Naive thymus-derived CD4-positive, alpha-beta T cell (primary cell): ENCODE measurements at regions of chr2 and their contacts with region 1.

Region 1: DNA sequence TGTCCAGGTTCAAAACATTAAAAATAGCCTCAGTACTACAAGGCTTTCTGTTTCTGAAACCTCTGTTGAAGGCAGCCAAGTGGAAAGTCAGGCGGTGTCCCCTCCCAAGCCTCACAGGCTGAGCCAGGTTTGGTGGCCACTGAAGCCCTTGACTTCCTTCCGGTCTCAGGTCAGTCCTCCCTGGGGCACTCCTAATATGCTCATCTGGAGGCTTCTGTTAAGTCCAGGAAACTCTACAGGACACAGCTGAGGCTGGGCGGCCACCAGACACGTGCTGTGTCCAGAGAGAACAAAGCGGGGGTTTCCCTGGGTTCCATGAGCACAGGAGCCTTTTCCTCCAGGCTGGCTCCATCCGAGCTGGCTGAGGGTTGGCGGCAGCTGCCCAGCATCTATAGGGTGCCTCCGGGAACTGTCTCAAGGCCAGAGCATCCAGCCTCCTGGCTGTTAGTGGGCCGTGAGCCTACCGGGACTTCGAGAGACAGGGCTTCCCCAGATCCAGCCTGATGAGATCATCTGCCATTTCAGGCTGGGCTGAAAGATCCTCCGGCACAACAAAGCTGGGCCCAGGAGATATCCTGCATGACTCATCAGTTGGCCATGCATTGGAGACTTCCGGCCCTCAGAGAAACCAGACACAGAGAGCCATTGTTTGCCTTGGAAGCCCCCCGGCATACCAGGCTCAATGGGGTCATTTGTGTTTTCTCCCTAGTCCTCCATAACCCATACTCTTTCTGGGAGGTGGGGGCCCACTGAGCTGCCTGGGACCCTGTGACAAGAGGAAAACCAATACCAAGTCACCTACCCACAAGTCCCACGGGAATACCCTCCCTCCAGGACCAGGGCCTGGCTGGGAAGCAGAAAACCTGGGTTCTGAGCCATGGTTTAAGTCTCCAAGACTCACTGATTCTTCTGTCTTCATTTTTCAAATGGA is 71.7 kb downstream of the HS1BP3 start:
- DNase-seq: no peak
- ATAC-seq: no peak
- H3K4me3 ChIP-seq: no peak overlapping the region
- H3K4me3 Mint-ChIP-seq: no peak overlapping the region
- H3K27ac ChIP-seq: no peak overlapping the region
- H3K27ac Mint-ChIP-seq: no peak overlapping the region
- H3K4me1 ChIP-seq: peaks cover 13% of the 10 kb centered on the region in 2 donors
- H3K4me1 Mint-ChIP-seq: peaks cover 9 to 22% (median 10%) of the 10 kb centered on the region in 7 donors
- H3K27me3 ChIP-seq: no peaks in the 10 kb centered on the region
- H3K27me3 Mint-ChIP-seq: no peaks in the 10 kb centered on the region

Region 2: DNA sequence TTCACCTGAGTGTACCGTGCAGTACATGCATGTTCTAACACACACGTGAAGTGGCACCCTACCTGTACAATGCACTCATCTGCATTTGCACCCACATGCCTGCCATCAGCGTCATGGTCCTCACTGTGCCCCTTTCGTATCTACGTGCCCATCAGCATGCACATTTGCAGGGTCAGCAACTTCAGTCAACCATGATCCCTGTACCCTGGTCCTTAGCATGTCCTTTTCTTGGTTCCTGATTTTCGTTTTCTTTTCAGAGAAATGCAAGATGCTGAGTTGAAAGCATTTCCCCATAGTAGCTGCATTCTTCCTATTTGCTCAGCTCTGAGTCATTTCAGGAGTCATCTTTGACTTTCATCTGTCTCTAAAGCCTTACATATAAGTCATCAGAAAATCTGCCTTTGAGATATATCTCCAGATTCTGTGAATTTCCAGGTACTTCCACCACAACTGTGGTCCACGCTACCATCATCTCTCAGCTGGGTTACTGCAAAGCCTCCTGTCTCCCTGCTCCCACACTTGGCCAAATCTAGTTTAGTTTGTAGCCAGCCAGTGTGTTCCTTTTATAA is 213.8 kb before region 1 on chr2:
- CTCF ChIA-PET with region 1: no interaction called
- POLR2A ChIA-PET with region 1: no interaction called
- intact Hi-C with region 1: loop called in 1 of 2 experiments (anchors 5 kb)
- DNase-seq: peak in 1 of 9 donors; percentile 57
- ATAC-seq: peak; percentile 27
- H3K4me3 ChIP-seq: no peak overlapping the region
- H3K4me3 Mint-ChIP-seq: peak overlapping the region in 1 of 10 donors; percentile 71
- H3K27ac ChIP-seq: no peak overlapping the region
- H3K27ac Mint-ChIP-seq: peak overlapping the region in 1 of 9 donors; percentile 79
- H3K4me1 ChIP-seq: no peaks in the 10 kb centered on the region
- H3K4me1 Mint-ChIP-seq: peaks cover 0 to 28% (median 0%) of the 10 kb centered on the region in 7 donors
- H3K27me3 ChIP-seq: no peaks in the 10 kb centered on the region
- H3K27me3 Mint-ChIP-seq: peaks cover 0 to 12% (median 7%) of the 10 kb centered on the region in 5 donors

Region 3: DNA sequence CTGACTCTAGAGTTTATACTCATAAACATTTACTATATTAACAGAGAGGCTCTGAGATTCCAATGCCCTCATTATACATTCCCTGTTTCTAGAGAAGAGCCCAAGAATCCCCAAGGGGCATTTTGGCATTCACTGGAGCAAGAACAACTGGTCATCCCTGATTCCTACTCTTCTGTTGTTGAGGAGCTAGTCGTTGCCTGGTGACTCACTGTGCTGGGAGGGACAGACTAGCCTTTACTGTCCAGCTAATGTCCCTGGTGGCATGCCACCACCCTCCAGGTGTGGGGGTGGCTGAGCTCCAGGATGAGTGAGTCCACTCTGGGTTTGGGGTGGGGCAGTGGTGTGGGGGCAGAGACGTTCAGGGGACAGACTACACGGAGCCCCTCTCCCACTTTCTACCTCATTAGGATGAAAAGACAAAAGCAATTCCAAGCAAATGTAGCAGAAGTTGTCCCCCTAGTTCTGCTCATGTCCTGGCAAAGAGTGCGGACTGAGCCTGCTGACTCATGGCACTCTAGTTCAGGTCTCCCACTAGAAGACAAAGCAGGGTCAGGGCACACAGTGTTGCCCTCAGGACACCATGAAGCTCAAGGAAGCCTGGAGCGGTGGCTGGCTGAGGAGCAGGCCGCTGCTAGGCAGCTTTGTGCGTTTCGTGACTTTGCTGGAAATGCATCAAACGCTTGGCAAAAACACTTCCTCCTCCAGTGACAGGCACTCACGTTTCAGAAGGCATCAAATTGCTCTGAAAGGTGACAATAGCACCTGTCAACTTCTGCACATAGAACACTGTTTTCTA is 82.9 kb before region 1 on chr2:
- CTCF ChIA-PET with region 1: no interaction called
- POLR2A ChIA-PET with region 1: no interaction called
- intact Hi-C with region 1: no loop called
- DNase-seq: no peak
- ATAC-seq: no peak
- H3K4me3 ChIP-seq: no peak overlapping the region
- H3K4me3 Mint-ChIP-seq: no peak overlapping the region
- H3K27ac ChIP-seq: no peak overlapping the region
- H3K27ac Mint-ChIP-seq: no peak overlapping the region
- H3K4me1 ChIP-seq: no peaks in the 10 kb centered on the region
- H3K4me1 Mint-ChIP-seq: peaks cover 0 to 7% (median 0%) of the 10 kb centered on the region in 7 donors
- H3K27me3 ChIP-seq: no peaks in the 10 kb centered on the region
- H3K27me3 Mint-ChIP-seq: peaks cover 0 to 11% (median 5%) of the 10 kb centered on the region in 5 donors